Activated B cell treated with CpG ODN at 0.5 μM for 24 hours (primary cell): ENCODE measurements at regions of chr7 and their contacts with region 1.

Region 1: DNA sequence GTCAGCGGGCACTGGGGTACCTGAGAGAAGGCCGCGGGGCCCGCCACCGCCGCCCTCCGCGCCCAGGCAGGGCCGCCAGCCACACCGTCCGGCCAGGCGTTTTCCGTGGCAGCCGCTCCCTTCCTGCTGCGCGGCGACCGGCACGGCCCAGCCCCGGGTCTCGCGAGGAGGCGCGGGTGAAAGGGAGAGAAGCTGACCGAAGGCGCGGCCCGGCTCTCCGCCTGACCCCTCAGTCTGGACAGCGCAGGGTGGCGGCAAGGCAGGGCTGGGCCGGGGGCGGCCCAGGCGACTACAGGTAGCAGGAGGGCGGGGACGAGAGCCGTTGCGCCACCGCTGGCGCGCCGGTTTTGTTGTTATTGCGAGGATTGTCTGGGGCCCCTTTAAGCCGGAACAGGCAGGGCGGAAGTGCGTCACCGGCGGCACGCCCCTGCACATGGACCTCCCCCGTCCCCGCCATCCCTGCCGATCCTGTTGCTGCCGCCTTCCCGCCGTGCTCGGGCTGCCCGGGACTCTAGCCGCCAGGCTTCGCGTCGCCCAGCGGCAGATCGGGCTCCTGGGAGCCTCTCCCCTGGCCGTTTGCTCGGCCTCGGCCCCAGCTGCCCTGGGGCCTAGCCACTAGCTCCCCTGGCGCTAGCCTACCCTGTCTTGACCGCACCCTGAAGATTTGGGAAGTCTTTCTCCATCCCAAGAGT is at the start of gene HERPUD2:
- DNase-seq: peak; percentile 88
- ATAC-seq: peak; percentile 90
- H3K4me3 Mint-ChIP-seq: peak within 1 kb of the TSS; percentile 95
- H3K27ac Mint-ChIP-seq: peak within 1 kb of the TSS; percentile 92
- H3K4me1 Mint-ChIP-seq: peaks cover 61% of the 10 kb centered on the region
- H3K27me3 Mint-ChIP-seq: no peaks in the 10 kb centered on the region
- CTCF ChIP-seq: no peak
- total RNA-seq, gene HERPUD2: 26.2 and 31.5 TPM in 2 replicates

Region 2: DNA sequence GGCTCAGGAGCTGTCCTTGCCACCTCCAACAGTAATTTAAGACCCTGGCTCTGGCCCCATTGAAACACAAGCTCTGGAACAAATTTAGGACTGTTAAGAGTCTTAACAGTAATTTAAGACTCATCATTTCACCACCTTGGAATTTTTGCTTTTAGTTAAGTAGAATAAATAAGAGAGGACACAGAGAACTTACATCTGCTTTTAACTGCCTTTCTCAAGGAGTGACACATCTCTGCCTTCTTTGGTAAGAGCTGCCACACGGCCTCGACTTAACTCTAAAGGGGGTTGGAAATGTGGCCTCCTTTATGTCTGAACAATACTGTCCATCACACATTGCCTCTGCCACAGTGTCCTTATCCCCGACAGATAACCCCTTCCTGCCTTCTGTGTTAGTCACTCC is 77.9 kb before region 1 on chr7:
- CTCF ChIA-PET with region 1: no interaction called
- POLR2A ChIA-PET with region 1: no interaction called
- intact Hi-C with region 1: no loop called
- DNase-seq: no peak
- ATAC-seq: no peak
- H3K4me3 Mint-ChIP-seq: no peak overlapping the region
- H3K27ac Mint-ChIP-seq: no peak overlapping the region
- H3K4me1 Mint-ChIP-seq: peaks cover 2% of the 10 kb centered on the region
- H3K27me3 Mint-ChIP-seq: no peaks in the 10 kb centered on the region
- CTCF ChIP-seq: no peak

Region 3: GRCh38 chr7:35658602-35659201 is 36.2 kb before region 1 on chr7:
- CTCF ChIA-PET with region 1: no interaction called
- POLR2A ChIA-PET with region 1: no interaction called
- intact Hi-C with region 1: loop called (anchors 5 kb)
- DNase-seq: no peak
- ATAC-seq: no peak
- H3K4me3 Mint-ChIP-seq: no peak overlapping the region
- H3K27ac Mint-ChIP-seq: no peak overlapping the region
- H3K4me1 Mint-ChIP-seq: peaks cover 30% of the 10 kb centered on the region
- H3K27me3 Mint-ChIP-seq: no peaks in the 10 kb centered on the region
- CTCF ChIP-seq: no peak

Region 4: DNA sequence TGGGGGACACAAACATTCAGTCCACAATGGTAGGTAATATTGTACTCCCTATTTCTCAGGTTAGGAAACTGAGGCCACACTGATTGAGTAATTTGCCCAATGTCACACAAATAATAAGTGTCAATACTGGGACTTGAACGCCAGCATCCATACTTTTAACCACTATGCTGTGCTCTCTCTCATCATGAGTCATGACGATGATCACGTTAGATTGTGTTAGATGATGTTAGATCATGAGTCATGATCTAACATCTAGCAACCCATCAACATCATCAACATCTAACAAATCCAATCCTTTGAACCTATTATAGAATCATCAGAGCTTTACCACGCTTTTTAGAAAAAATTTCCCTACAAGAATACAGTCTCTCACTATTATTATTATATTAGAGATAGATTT is 28.1 kb after region 1 on chr7:
- CTCF ChIA-PET with region 1: no interaction called
- POLR2A ChIA-PET with region 1: interaction called, 16 read pairs
- intact Hi-C with region 1: loop called (anchors 1 kb)
- DNase-seq: no peak
- ATAC-seq: no peak
- H3K4me3 Mint-ChIP-seq: no peak overlapping the region
- H3K27ac Mint-ChIP-seq: peak overlapping the region; percentile 41
- H3K4me1 Mint-ChIP-seq: peaks cover 73% of the 10 kb centered on the region
- H3K27me3 Mint-ChIP-seq: no peaks in the 10 kb centered on the region
- CTCF ChIP-seq: no peak

Region 5: GRCh38 chr7:35747611-35748010 is 52.7 kb after region 1 on chr7:
- CTCF ChIA-PET with region 1: no interaction called
- POLR2A ChIA-PET with region 1: no interaction called
- intact Hi-C with region 1: no loop called
- DNase-seq: no peak
- ATAC-seq: no peak
- H3K4me3 Mint-ChIP-seq: no peak overlapping the region
- H3K27ac Mint-ChIP-seq: no peak overlapping the region
- H3K4me1 Mint-ChIP-seq: no peaks in the 10 kb centered on the region
- H3K27me3 Mint-ChIP-seq: no peaks in the 10 kb centered on the region
- CTCF ChIP-seq: no peak

Region 6: GRCh38 chr7:35906191-35906908 is 211.4 kb after region 1 on chr7:
- CTCF ChIA-PET with region 1: interaction called, 5 read pairs
- POLR2A ChIA-PET with region 1: interaction called, 3 read pairs
- intact Hi-C with region 1: loop called (anchors 1 kb)
- DNase-seq: no peak
- ATAC-seq: peak; percentile 96
- H3K4me3 Mint-ChIP-seq: no peak overlapping the region
- H3K27ac Mint-ChIP-seq: peak overlapping the region; percentile 41
- H3K4me1 Mint-ChIP-seq: peaks cover 3% of the 10 kb centered on the region
- H3K27me3 Mint-ChIP-seq: no peaks in the 10 kb centered on the region
- CTCF ChIP-seq: peak; percentile 11

Region 7: DNA sequence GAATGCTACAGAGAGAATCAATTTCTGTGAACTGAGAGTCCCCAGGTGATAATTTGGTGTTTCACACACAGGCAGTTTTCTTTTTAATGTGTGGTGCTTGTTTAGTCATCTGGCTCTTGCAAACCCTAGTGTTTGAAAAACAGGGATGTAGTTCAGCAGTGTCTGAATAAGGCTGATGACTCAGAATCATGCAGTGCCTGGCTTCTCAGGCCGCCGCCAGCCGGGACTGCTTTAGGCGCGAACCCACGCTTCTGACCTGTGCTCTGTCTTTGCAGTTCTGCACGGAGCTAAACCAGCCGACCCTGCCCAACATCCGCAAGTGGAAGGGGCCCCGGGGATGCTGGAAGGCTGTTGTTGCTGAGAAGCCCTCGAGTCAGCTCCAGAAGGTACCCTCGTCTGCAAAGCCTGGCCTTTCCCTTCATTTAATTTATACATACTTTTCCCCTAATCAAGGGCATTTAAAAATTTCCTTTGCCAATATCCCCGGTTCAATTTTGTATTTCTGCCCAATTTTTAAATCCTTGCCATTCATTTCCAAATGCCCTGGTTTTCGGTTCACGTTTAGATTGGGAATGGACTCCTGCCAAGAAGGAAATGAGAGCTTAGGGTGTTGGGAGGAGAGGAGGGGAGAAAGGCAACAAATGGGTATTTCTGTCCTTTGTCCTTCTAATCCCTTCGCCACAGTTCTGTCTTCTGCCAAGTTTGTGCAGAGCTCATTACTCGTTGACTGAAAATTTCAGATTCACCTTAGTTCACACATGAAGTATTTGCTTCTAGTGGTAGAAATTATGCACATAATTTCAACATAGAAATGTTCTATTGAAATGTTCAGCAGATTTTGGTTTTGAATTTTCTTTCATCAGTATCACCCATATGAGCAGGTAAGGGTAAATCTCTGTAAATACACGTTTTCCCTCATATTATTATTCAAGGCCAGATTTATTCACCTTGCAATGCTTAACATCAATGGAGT is 586.2 kb after region 1 on chr7:
- CTCF ChIA-PET with region 1: no interaction called
- POLR2A ChIA-PET with region 1: no interaction called
- intact Hi-C with region 1: loop called (anchors 10 kb)
- DNase-seq: no peak
- ATAC-seq: no peak
- H3K4me3 Mint-ChIP-seq: no peak overlapping the region
- H3K27ac Mint-ChIP-seq: no peak overlapping the region
- H3K4me1 Mint-ChIP-seq: peaks cover 30% of the 10 kb centered on the region
- H3K27me3 Mint-ChIP-seq: peaks cover 14% of the 10 kb centered on the region
- CTCF ChIP-seq: no peak